ENCODE measurements at regions of chr2 and their contacts with region 1.

Region 1: DNA sequence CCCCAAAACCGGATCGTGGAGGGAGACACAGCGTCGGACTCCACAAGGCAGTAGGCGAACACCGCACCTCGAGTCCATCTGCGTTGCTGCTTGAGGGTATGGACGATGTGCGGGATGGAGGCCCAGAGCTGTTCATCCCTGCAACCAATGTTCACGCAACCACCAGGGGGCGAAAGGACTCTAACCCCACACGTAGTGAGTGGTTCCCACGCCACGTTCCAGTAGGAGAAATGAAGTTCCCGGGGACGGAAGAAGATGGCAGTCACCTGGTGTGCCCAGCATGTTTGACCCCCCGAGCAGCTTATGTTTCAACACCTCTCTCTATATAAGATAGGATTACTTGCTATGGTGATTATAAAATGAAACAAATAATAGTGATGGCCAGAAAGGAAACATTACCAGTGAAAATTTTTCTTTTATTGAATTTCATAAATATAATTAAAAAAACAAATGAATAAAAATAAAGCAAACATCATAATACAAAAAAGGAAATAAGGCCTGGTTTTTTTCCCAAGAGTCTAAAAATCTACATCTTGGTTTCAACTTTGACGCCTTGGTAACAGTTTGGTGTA is 184.3 kb downstream of the SH3BP4 start:
- DNase-seq: peak; percentile 83
- ATAC-seq: peak; percentile 75
- H3K4me3 Mint-ChIP-seq: no peak overlapping the region
- H3K27ac Mint-ChIP-seq: no peak overlapping the region
- H3K4me1 Mint-ChIP-seq: no peaks in the 10 kb centered on the region
- H3K27me3 Mint-ChIP-seq: peaks cover 40% of the 10 kb centered on the region
- CTCF ChIP-seq: peak; percentile 58

Region 2: DNA sequence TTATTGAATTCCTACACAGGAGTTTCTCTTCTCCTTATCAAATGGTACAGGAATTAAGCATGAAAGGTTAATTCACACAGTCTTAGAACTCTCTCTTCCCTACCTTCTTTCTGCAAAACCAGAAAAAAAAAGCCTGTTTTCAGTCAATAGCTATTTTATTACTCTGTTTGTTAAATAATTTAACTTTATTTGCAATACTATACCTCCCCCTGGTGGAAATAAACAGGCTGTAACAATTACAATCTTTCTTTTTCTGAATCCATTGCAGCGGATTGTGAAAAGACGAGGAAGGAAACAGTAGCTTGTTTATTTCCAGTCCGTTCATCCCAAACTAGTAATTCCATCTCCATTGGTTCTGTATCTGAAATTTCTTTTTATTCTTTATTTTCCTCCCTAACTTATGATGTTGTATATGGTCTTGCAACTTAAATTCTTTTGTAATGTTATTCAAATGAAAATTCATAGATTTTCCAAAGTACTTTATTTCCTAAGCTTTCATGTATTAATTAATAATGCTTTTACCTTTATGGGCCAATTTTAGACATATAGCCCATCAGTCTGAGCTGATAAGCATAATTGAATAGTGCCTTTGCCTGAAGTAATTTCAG is 19.1 kb before region 1 on chr2:
- CTCF ChIA-PET with region 1: interaction called, 10 read pairs
- POLR2A ChIA-PET with region 1: no interaction called
- DNase-seq: no peak
- ATAC-seq: no peak
- H3K4me3 Mint-ChIP-seq: no peak overlapping the region
- H3K27ac Mint-ChIP-seq: no peak overlapping the region
- H3K4me1 Mint-ChIP-seq: peaks cover 13% of the 10 kb centered on the region
- H3K27me3 Mint-ChIP-seq: peaks cover 25% of the 10 kb centered on the region
- CTCF ChIP-seq: peak; percentile 56

Region 3: DNA sequence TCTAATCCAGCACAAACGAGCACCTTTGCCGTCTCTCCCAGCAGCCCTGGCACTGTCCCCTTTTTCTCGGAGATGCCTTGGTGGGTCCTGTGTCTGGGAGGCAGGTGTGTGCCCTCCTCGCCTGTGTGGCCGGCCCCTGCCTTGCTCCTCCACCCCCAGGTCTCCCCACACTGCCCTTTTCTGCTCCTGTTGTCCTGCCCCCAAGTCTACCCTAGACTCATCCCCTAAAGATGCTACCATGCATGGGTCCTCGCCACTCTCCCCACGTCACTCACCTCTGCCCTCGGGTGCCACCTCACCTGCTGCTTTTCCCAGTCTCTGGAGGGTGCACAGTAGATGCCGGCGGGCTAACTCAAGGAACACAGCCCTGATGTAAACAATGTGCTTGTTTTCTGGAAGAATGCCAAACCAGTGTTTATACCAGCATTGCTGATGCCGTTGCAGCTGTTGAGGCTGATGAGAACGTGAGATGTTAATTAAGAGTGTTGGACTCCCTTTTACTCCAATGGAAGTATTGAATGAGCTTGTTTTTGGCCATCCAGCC is 580.9 kb after region 1 on chr2:
- CTCF ChIA-PET with region 1: no interaction called
- POLR2A ChIA-PET with region 1: no interaction called
- DNase-seq: no peak
- ATAC-seq: no peak
- H3K4me3 Mint-ChIP-seq: no peak overlapping the region
- H3K27ac Mint-ChIP-seq: peak overlapping the region; percentile 54
- H3K4me1 Mint-ChIP-seq: peaks cover 22% of the 10 kb centered on the region
- H3K27me3 Mint-ChIP-seq: no peaks in the 10 kb centered on the region
- CTCF ChIP-seq: no peak